ENCODE measurements at regions of chr2 and their contacts with region 1.

Region 1: GRCh38 chr2:143259368-143259958 is 130.2 kb downstream of the ARHGAP15 start:
- DNase-seq: peak; percentile 69
- H3K4me3 ChIP-seq: no peak overlapping the region
- H3K27ac ChIP-seq: no peak overlapping the region
- H3K4me1 ChIP-seq: no peaks in the 10 kb centered on the region
- H3K27me3 ChIP-seq: no peaks in the 10 kb centered on the region
- CTCF ChIP-seq: peak; percentile 60

Region 2: DNA sequence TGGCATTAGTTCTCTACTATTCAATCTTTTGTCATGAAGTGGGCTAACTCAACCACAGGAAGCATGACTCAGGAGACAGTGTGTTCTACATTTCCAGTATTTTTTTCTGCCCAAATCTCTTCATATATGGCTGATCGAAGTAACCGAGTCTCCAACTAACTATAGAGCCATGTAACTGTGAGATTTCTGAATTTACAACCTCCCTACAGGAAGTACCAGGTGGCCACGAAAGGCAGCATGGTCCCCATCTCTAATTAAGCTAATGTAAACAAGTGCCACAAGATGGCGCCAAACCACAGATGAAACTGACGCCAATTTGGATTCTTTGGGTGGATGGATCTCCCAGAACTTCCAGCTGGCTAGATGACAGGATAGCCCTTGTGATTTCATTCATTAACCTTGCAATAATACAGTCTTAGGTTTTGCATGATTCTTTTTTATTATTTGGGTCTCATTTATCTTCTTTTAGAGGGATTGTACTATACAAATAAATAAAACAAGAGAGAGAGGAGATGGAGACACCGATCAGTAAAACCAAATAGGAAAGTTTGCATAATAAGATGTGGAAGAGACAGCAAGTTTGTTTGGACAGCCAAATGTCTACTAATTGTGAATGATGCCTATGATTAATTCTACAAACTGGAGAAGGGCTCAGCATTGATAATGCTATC is 148.6 kb before region 1 on chr2:
- intact Hi-C with region 1: loop called (anchors 10 kb)
- DNase-seq: peak; percentile 57
- H3K4me3 ChIP-seq: no peak overlapping the region
- H3K27ac ChIP-seq: no peak overlapping the region
- H3K4me1 ChIP-seq: no peaks in the 10 kb centered on the region
- H3K27me3 ChIP-seq: no peaks in the 10 kb centered on the region
- CTCF ChIP-seq: peak; percentile 60

Region 3: GRCh38 chr2:143204062-143204461 is 55.4 kb before region 1 on chr2:
- intact Hi-C with region 1: loop called (anchors 5 kb)
- DNase-seq: no peak
- H3K4me3 ChIP-seq: no peak overlapping the region
- H3K27ac ChIP-seq: no peak overlapping the region
- H3K4me1 ChIP-seq: no peaks in the 10 kb centered on the region
- H3K27me3 ChIP-seq: no peaks in the 10 kb centered on the region
- CTCF ChIP-seq: no peak